ENCODE measurements at regions of chr2 and their contacts with region 1.

Region 1: DNA sequence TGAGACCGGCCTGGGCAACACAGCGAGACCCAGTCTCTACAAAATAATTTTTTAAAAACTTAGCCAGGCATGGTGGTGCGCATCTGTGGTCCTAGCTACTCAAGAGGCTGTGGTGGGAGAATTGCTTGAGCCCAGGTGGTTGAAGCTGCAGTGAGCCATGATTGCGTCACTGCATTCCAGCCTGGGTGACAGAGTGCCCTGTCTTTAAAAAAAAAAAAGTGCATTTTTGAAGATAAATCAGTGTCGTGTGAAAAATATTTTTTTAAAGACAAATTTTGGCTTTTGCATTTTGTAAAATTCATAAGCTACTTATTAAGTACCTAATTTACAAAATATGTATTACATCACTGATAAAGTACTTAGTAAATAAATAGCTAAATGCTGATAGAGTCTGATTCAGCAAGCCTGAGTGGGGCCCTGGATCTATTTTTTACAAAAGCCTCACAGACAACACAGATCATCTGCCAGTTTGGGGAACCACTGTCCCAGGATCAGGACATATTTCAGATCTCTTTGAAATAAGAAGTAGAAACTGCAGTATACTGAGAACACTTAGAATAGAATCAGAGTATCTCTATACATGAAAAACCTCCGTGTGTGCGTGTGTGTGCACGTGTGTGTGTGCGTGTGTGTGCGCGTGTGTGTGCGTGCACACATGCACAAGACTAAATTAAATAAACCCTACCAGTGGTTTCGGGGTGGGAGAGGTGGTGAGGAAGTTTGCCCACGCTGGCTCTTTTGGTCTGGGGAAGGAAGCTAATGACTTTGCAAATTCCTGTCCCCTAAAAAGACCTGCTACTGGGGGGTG is 61.6 kb downstream of the AAK1 start:
- DNase-seq: no peak
- H3K4me3 Mint-ChIP-seq: no peak overlapping the region
- H3K27ac Mint-ChIP-seq: peak overlapping the region; percentile 38
- H3K4me1 Mint-ChIP-seq: peaks cover 90% of the 10 kb centered on the region
- H3K27me3 Mint-ChIP-seq: no peaks in the 10 kb centered on the region

Region 2: DNA sequence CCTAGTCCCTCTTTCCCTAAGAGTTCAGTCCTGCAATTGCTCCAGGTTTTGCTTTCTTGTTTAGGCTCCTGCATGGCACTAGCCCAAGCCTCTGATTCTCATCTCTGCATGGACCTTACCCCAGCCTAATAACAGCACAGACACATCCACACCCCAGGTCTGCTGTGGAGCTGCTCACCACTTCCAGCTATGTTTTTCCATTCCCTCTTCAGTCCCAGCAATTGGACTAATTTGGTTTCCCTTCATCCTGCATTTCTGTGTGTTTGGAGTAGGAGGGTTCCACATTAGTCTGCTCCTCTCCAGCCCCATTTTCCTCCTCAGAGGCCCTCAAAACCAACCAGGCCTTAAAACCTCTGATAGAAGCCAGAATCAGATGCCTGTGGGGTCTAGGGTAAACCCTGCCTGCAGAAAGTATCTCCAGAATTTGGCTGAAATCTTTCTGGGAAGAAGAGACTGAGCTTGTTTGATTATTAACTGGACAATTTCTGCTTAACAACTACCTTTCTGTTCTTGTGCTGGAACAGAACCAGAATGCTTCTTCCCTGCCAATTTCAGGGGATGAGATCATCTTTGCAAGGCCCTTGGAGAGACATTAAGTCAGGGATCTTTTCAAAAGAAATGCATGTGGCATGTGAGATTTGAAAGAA is 290.9 kb before region 1 on chr2:
- CTCF ChIA-PET with region 1: no interaction called
- POLR2A ChIA-PET with region 1: no interaction called
- intact Hi-C with region 1: no loop called
- DNase-seq: no peak
- H3K4me3 Mint-ChIP-seq: no peak overlapping the region
- H3K27ac Mint-ChIP-seq: no peak overlapping the region
- H3K4me1 Mint-ChIP-seq: no peaks in the 10 kb centered on the region
- H3K27me3 Mint-ChIP-seq: peaks cover 7% of the 10 kb centered on the region

Region 3: GRCh38 chr2:69601179-69601612 is 19.2 kb after region 1 on chr2:
- CTCF ChIA-PET with region 1: interaction called, 4 read pairs
- POLR2A ChIA-PET with region 1: interaction called, 6 read pairs
- intact Hi-C with region 1: loop called (anchors 2 kb)
- DNase-seq: no peak
- H3K4me3 Mint-ChIP-seq: no peak overlapping the region
- H3K27ac Mint-ChIP-seq: peak overlapping the region; percentile 85
- H3K4me1 Mint-ChIP-seq: peaks cover 88% of the 10 kb centered on the region
- H3K27me3 Mint-ChIP-seq: no peaks in the 10 kb centered on the region

Region 4: DNA sequence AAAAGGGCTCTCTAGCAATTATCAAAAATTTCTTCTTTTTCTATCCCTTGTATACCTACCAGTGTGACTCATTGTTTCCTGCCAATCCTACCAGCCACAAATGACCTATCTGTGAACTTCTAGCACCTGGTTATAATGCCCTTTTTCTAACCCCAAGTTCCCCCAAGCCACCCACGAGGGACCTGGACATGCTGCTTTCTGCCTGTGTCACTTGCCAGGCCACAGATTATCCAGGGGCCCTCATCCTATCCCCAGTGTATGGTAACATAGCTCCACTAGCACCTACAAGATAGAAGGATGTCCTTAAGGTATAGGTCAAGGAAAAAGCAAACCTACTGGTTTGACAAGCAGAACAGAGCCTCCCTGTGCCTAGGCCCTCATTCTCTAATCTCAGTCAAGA is 34.8 kb after region 1 on chr2:
- CTCF ChIA-PET with region 1: interaction called, 4 read pairs
- POLR2A ChIA-PET with region 1: no interaction called
- intact Hi-C with region 1: loop called (anchors 1 kb)
- DNase-seq: peak; percentile 67
- H3K4me3 Mint-ChIP-seq: peak overlapping the region; percentile 7
- H3K27ac Mint-ChIP-seq: peak overlapping the region; percentile 38
- H3K4me1 Mint-ChIP-seq: peaks cover 40% of the 10 kb centered on the region
- H3K27me3 Mint-ChIP-seq: no peaks in the 10 kb centered on the region

Region 5: GRCh38 chr2:69625078-69625795 is 43.3 kb after region 1 on chr2:
- CTCF ChIA-PET with region 1: no interaction called
- POLR2A ChIA-PET with region 1: no interaction called
- intact Hi-C with region 1: loop called (anchors 2 kb)
- DNase-seq: no peak
- H3K4me3 Mint-ChIP-seq: no peak overlapping the region
- H3K27ac Mint-ChIP-seq: no peak overlapping the region
- H3K4me1 Mint-ChIP-seq: peaks cover 15% of the 10 kb centered on the region
- H3K27me3 Mint-ChIP-seq: no peaks in the 10 kb centered on the region

Region 6: GRCh38 chr2:69694894-69695849 is 113.2 kb after region 1 on chr2:
- CTCF ChIA-PET with region 1: no interaction called
- POLR2A ChIA-PET with region 1: no interaction called
- intact Hi-C with region 1: loop called (anchors 5 kb)
- DNase-seq: no peak
- H3K4me3 Mint-ChIP-seq: no peak overlapping the region
- H3K27ac Mint-ChIP-seq: peak overlapping the region; percentile 47
- H3K4me1 Mint-ChIP-seq: peaks cover 78% of the 10 kb centered on the region
- H3K27me3 Mint-ChIP-seq: no peaks in the 10 kb centered on the region